ENCODE measurements at regions of chr13 and their contacts with region 1.

Region 1: DNA sequence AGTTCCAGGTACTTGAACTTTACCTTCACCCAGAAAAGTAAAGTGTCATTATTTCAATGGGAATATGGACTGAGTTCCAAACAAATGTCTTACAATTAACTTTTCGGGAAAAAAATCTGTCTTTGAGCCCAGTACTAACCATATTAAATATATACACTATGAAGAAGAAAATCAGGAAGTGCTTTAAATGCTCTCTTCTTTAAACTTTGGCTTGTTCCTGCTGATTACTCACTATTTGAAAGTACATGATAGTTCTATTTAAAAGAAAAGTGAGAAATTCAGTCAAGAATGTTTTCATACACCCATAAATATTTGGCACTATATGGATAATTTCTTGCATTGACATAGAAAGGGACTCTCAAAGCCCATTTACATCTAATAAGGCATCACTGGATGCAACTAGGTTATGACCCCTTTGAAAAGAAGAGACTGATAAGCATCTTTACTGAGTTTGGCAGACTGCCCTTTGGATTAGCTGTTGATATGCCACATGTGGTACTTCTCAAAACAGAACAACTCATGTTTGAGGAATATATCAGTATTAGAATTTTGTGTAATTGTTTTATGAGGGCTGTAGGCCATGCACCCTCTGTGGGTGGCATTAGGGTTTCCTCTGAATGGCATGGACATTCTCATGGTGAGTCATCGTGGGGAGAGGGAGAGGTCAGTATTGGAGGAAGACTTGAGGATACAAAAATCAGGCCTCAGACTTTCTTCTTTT is 25.0 kb upstream of the VWA8 start:
- DNase-seq: peak; percentile 54
- H3K4me3 ChIP-seq: no peak overlapping the region
- H3K27ac ChIP-seq: no peak overlapping the region
- H3K4me1 ChIP-seq: peaks cover 16% of the 10 kb centered on the region
- H3K27me3 ChIP-seq: no peaks in the 10 kb centered on the region
- CTCF ChIP-seq: no peak

Region 2: GRCh38 chr13:41942462-41943094 is 43.4 kb before region 1 on chr13:
- CTCF ChIA-PET with region 1: interaction called, 13 read pairs
- dilution Hi-C with region 1: no loop called
- in situ Hi-C with region 1: no loop called
- intact Hi-C with region 1: no loop called
- DNase-seq: peak; percentile 34
- H3K4me3 ChIP-seq: no peak overlapping the region
- H3K27ac ChIP-seq: no peak overlapping the region
- H3K4me1 ChIP-seq: no peaks in the 10 kb centered on the region
- H3K27me3 ChIP-seq: no peaks in the 10 kb centered on the region
- CTCF ChIP-seq: peak; percentile 26 to 65

Region 3: GRCh38 chr13:42028113-42028799 is 42.3 kb after region 1 on chr13:
- CTCF ChIA-PET with region 1: no interaction called
- dilution Hi-C with region 1: no loop called
- in situ Hi-C with region 1: no loop called
- intact Hi-C with region 1: loop called (anchors 5 kb)
- DNase-seq: no peak
- H3K4me3 ChIP-seq: no peak overlapping the region
- H3K27ac ChIP-seq: no peak overlapping the region
- H3K4me1 ChIP-seq: peaks cover 37% of the 10 kb centered on the region
- H3K27me3 ChIP-seq: no peaks in the 10 kb centered on the region
- CTCF ChIP-seq: no peak

Measured in mammary epithelial cell (primary cell).